Ascending aorta (tissue), 2 donors: ENCODE measurements at regions of chr12 and their contacts with region 1.

Region 1: DNA sequence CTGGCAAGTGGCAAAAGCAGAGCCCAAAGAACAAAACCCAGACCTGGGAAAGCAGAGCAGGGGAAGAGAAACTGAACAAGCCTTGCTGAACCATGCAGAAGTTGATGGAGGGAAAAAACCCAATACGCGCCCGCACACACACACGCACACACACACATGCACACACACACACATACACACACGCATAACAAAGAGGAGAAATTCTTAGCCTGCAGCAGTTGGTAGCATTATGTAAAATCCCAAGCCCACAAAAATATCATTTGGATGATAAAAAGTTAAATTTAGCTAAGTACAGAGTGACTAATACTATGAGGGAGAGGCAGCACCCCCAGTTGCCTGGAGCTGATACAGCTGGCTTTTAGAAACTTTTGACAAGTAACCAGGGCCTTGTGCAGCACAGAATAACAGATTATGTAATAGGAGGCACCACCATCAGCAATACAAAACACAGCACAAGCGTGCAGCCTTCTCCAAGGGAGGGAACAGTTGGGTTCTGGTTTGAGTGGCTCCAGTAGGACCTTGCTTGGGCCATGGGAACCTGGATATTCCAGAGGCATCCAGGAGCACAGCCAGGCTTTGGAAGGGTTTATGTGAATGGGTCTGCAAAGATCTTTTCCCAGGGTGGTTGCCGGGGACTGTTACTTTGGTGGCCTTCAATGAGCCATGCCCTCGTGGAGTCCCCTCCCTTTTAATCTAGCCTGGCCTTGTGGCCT is 35.3 kb downstream of the PITPNM2 start:
- DNase-seq: peak; percentile 51 to 88
- H3K4me3 ChIP-seq: peak overlapping the region in 1 of 2 donors; percentile 26
- H3K27ac ChIP-seq: peak overlapping the region; percentile 61 to 70
- H3K4me1 ChIP-seq: peaks cover 8 to 22% of the 10 kb centered on the region in 2 donors
- H3K27me3 ChIP-seq: no peaks in the 10 kb centered on the region
- CTCF ChIP-seq: no peak

Region 2: DNA sequence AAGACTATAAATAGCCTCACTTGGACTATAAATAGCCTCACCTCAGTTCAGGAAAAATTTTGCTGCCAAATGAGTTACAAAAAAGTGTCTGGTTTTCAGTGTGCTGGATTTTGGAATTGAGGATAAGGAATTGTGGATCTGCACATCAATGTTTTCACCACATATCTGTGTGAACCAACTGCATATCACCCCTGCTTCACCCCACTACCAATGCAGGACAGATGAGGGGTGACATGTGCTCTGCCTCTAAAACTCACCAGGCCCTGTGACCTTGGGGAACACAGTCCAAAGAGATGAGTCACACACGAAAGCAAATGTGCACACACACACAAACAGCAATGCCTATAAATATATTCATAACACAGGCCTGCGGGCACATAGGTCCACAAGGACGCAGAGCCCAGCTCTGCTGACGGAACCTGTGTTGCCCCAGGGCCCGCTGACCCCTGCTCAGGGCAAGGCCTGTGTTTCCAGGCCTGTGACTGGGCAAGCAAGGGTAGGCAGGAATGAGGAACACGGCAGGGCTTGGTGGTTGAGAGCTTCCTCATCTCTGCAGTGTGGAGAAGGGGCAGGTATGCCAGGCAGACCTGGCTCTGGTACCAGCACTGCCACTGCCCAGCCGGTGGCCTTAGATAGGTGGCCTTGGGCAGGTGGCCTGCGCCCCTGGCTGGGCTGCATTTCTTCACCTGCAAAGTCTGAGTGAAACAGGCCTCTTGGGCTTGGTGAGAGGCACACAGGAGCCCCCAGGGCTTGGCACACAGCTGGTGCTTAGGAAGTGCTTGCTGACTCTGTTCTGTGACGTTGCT is 52.7 kb before region 1 on chr12:
- intact Hi-C with region 1: loop called (anchors 2 kb)
- DNase-seq: peak; percentile 53 to 83
- H3K4me3 ChIP-seq: no peak overlapping the region
- H3K27ac ChIP-seq: peak overlapping the region; percentile 75 to 94
- H3K4me1 ChIP-seq: peaks cover 29 to 58% of the 10 kb centered on the region in 2 donors
- H3K27me3 ChIP-seq: no peaks in the 10 kb centered on the region
- CTCF ChIP-seq: no peak

Region 3: DNA sequence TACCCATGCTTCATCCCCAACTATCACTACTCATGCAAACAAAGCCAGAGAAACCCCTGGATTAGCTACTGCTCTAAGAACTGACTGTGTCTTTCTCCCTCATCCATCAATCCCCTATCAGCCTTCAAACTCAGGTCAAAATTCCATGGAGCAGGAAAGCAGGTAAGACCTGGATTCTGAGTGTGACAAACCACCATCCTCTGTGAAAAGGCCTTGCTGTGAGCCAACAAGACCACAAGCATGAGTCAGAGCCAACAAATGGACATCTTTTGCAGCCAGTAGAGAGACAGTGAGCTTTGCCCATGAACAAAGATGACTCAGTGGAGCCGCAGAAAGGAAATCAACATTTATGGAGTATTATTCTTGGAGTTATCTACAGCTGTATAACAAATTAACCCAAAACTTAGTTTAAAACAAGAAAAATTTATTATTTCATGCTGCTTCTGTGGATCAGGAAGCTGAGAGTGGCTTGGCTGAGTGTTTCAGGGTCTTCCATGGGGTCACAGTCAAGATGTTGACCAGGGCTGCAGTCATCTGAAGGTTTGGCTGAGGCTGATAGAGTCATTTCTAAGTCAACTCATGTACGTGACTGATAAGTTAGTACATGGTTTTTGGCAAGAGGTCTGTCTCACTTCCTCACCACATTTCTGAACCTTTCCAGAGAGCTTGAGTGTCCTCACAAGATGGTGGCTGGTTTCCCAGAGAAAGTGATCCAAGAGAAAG is 25.8 kb before region 1 on chr12:
- intact Hi-C with region 1: loop called (anchors 1 kb)
- DNase-seq: no peak
- H3K4me3 ChIP-seq: no peak overlapping the region
- H3K27ac ChIP-seq: peak overlapping the region in 1 of 2 donors; percentile 29
- H3K4me1 ChIP-seq: peaks cover 7 to 16% of the 10 kb centered on the region in 2 donors
- H3K27me3 ChIP-seq: no peaks in the 10 kb centered on the region
- CTCF ChIP-seq: no peak

Region 4: GRCh38 chr12:123150744-123151456 is 35.3 kb after region 1 on chr12 and contains the start of gene PITPNM2:
- intact Hi-C with region 1: loop called (anchors 2 kb)
- DNase-seq: peak in 1 of 2 donors; percentile 79
- H3K4me3 ChIP-seq: peak within 1 kb of the TSS; percentile 82 to 90
- H3K27ac ChIP-seq: peak within 1 kb of the TSS; percentile 86 to 88
- H3K4me1 ChIP-seq: peaks cover 2 to 18% of the 10 kb centered on the region in 2 donors
- H3K27me3 ChIP-seq: no peaks in the 10 kb centered on the region
- CTCF ChIP-seq: peak in 1 of 3 experiments; percentile 56
- total RNA-seq, gene PITPNM2: 8.4 TPM

Region 5: GRCh38 chr12:123180171-123180570 is 64.6 kb after region 1 on chr12:
- intact Hi-C with region 1: no loop called
- DNase-seq: no peak
- H3K4me3 ChIP-seq: no peak overlapping the region
- H3K27ac ChIP-seq: no peak overlapping the region
- H3K4me1 ChIP-seq: no peaks in the 10 kb centered on the region
- H3K27me3 ChIP-seq: no peaks in the 10 kb centered on the region
- CTCF ChIP-seq: no peak